MCF 10A (cell line): ENCODE measurements at regions of chr11 and their contacts with region 1.

Region 1: DNA sequence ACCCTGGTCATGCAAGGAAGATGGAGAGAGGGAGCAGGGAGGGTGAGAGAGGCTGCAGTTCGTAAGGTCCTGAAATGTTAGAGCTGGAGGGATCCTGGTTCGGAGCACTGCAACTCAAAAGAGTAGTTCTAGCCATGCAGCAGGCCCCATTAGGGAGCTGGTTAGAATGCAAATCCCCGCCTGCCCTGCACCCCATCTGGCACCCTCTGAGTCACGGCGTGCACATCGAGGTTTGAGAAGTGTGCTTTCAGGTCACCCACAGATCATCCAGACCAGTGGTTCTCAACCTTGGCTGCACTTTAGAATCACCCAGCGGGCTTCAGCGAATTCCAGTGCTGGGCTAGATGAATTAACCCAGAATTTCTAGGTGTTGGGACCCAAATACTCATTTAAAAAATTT is 48.2 kb downstream of the ST3GAL4 start:
- DNase-seq: peak; percentile 68
- H3K4me3 Mint-ChIP-seq: peak overlapping the region; percentile 8
- H3K27ac Mint-ChIP-seq: peak overlapping the region; percentile 65
- H3K4me1 Mint-ChIP-seq: peaks cover 33% of the 10 kb centered on the region
- H3K27me3 Mint-ChIP-seq: no peaks in the 10 kb centered on the region
- CTCF ChIP-seq: no peak

Region 2: DNA sequence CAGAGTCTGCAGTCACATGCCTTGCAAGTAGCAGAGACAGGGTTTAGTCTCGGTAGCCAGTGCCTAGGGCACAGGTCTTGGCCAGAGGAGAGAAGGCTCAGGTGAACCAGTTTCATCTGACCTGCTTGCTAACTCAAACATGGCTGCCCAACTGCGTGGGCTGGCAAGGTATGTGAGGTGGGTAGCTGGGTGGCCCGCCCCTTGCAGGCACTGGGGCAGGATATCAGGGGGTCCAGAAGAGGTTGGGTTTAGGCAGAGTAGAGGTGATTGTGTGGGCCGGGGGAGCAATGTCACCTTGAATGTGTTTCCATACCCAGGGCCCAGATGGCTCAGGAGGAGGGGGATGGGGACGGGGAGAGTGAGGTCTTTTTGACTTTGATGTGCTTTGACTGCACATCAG is 10.5 kb before region 1 on chr11:
- CTCF ChIA-PET with region 1: interaction called, 6 read pairs
- POLR2A ChIA-PET with region 1: interaction called, 11 read pairs
- intact Hi-C with region 1: no loop called
- DNase-seq: no peak
- H3K4me3 Mint-ChIP-seq: no peak overlapping the region
- H3K27ac Mint-ChIP-seq: peak overlapping the region; percentile 83
- H3K4me1 Mint-ChIP-seq: peaks cover 27% of the 10 kb centered on the region
- H3K27me3 Mint-ChIP-seq: no peaks in the 10 kb centered on the region
- CTCF ChIP-seq: no peak